HAP-1 (cell line): ENCODE measurements at regions of chrX and their contacts with region 1.

Region 1: GRCh38 chrX:136028251-136028984 is 43.2 kb downstream of the SLC9A6 start:
- DNase-seq: peak in 1 of 2 experiments; percentile 70
- H3K4me3 ChIP-seq: no peak overlapping the region
- H3K4me1 ChIP-seq: no peaks in the 10 kb centered on the region
- H3K27me3 ChIP-seq: no peaks in the 10 kb centered on the region

Region 2: DNA sequence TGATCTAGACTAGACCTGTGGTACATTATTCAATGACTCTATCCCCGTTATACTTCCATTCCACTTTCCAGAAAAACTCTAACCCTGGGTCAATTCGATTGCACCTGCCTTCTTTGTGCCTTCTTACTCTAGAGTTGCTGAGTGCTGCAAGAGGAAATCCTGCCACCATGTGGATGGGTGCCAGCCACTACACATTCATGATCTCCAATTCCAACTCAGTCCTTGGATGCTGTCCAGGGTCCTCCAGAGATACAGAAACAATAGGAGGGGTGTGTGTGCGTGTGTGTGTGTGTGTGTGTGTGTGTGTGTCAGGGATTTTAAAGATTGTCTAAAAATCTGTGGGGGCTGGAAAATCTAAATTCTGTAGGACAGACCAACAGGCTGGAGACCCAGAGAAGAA is 550.8 kb before region 1 on chrX:
- in situ Hi-C with region 1: no loop called
- DNase-seq: peak; percentile 86 to 89
- H3K4me3 ChIP-seq: no peak overlapping the region
- H3K4me1 ChIP-seq: 0 out of 2 replicates have a peak, but pooled peaks cover 2% of the 10 kb centered on the region
- H3K27me3 ChIP-seq: no peaks in the 10 kb centered on the region

Region 3: DNA sequence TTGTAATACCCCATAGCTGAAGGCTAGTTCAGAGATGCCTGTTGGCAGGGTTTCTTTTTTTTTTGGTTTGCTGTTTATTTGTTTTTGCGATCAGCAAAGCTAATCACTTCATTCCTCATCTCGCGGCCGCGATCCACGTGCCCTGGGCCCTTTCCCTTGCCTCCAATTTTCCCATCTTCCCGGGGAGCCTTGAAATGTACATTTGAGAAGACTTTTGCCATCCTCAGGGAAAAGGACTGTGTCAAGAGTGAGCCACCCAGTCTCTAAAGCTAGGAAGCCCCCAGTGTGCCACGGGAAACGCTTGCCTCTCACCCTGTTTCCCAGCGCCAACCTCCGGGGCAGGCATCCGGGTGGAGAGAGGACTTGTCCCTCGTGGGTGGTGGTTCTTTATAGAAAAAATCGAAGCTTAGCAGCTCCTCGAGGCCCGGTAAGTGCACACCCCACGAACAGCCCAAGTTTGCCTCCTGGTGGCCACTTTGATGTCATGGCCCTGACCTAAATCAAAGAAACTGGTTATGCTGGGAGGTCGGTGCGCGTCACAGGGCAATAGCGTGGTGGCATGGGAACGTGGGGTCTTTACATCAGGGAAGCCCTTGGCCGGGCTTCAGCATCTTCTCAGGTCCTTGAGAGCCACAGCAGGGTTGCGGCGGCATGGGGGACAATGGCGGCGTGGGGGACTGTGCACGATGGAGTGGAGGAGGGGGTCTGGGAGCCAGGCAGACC is 180.8 kb after region 1 on chrX:
- in situ Hi-C with region 1: loop called (anchors 25 kb)
- DNase-seq: peak; percentile 25 to 65
- H3K4me3 ChIP-seq: no peak overlapping the region
- H3K4me1 ChIP-seq: peaks cover 3% of the 10 kb centered on the region
- H3K27me3 ChIP-seq: no peaks in the 10 kb centered on the region

Region 4: DNA sequence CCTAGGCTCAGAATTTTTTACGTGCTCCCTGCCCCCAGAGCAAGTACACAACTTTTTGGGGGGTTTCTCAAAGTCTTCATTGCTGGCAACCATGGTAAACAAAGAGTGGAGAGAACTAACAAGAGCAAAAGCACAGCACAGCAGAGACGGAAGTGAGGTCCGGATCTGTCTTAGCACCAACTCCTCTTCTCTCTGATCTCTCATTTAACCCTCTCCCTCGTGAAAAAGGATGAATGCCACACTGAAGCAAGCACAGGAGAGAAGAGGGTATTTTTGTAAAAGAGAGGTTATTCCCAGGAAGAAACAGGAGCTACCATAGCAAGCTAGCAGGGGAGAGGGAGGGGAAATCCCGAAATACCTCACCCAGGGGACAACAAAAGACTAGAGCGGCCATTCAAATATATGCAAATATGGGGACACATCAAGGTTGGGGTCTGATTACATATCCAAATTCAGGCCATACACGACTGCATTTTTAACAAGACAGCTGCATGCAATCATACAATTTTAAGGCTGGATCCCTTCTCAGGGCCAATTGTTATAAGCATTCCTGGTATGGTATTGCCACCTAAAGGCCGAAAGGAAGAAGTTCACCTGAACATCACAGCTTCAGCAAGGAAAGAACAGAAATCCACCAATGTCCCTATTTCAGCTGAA is 666.1 kb after region 1 on chrX:
- in situ Hi-C with region 1: loop called (anchors 25 kb)
- DNase-seq: peak; percentile 52 to 84
- H3K4me3 ChIP-seq: no peak overlapping the region
- H3K4me1 ChIP-seq: peaks cover 4% of the 10 kb centered on the region; the same call in 1 of the 2 replicates
- H3K27me3 ChIP-seq: no peaks in the 10 kb centered on the region